T-cell (primary cell): ENCODE measurements at regions of chr4 and their contacts with region 1.

Region 1: DNA sequence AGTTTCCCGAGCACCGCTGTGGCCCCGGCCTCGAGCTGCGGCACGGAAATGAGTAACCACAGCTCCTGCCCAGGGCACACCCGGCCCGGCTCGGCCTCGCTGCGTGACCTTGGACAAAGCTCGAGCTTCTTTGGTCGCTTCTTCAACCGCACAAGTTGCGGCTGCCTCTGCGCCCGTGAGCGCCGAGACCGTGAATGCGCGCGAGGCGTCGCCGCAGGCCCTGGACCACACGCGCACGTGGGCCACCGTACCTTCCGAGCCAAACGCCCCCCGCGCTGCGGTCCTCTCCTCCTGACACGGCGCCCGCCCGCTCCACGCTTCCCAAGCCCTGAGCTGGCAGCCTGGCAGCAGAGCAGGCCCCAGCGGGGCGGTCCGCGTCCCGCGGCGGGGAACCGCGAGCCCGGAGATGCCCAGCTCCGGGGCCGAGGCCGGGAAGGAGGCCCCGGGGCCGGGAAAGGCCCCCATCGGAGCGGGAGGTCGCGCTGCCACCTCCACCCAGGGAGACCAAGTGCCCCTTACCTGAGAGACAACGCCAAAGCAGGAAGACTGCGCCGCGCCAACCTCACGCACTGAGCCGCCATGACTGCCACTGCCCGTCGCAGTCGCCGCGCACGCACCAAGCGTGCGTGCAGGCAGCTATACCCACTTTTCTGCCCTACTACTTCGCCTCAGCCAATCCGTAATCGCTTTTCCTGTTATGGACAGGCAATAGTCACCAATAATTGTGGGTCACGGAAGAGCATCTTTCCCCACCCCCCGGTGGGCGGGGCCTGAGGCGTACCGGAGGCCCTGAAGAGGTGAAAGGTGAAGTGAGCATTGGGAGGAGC is at the start of gene GRPEL1:
- DNase-seq: peak in 34 of 35 experiments; percentile 98 to 100 (median 100)
- ATAC-seq: peak; percentile 86 to 94 (median 91)
- H3K4me3 ChIP-seq: peak within 1 kb of the TSS; percentile 81 to 86
- H3K4me3 Mint-ChIP-seq: peak within 1 kb of the TSS; percentile 90 to 97 (median 93)
- H3K27ac ChIP-seq: peak within 1 kb of the TSS; percentile 59
- H3K27ac Mint-ChIP-seq: peak within 1 kb of the TSS; percentile 96
- H3K4me1 ChIP-seq: peaks cover 11 to 50% of the 10 kb centered on the region in 2 experiments
- H3K4me1 Mint-ChIP-seq: peaks cover 42 to 57% (median 55%) of the 10 kb centered on the region in 3 donors
- H3K27me3 ChIP-seq: peaks cover 0 to 7% of the 10 kb centered on the region in 2 experiments
- H3K27me3 Mint-ChIP-seq: peaks cover 0 to 2% of the 10 kb centered on the region in 2 donors
- total RNA-seq, gene GRPEL1: 29.9 to 54.6 (median 36.8) TPM

Region 2: DNA sequence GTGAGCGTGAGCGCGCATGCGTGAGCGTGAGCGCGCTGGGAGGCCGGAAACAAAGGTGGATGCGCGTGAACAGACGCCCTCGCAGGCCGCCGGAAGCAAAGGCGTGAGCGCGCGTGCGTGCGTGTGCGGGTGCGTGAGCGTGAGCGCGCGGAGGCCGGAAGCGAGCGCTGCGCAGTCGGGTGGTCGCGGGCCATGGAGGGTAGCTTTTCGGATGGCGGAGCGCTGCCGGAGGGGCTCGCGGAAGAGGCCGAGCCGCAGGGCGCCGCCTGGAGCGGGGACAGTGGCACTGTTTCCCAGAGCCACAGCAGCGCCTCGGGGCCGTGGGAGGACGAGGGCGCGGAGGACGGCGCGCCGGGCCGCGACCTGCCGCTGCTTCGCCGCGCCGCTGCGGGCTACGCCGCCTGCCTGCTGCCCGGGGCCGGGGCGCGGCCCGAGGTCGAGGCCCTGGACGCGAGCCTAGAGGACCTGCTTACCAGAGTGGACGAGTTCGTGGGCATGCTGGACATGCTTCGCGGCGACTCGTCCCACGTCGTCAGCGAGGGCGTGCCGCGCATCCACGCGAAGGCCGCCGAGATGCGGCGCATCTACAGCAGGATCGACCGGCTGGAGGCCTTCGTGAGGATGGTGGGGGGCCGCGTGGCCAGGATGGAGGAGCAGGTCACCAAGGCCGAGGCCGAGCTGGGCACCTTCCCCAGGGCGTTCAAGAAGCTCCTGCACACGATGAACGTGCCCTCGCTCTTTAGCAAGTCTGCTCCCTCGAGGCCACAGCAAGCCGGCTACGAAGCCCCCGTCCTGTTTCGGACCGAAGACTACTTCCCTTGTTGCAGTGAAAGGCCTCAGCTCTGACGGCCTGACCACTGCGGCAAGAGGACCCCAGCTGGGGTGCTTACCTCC is 351.4 kb before region 1 on chr4 and contains the start of gene BLOC1S4:
- CTCF ChIA-PET with region 1: interaction called, 4 to 13 read pairs
- POLR2A ChIA-PET with region 1: no interaction called
- DNase-seq: peak; percentile 78 to 99 (median 87)
- ATAC-seq: peak; percentile 85 to 90 (median 86)
- H3K4me3 ChIP-seq: peak within 1 kb of the TSS; percentile 87 to 90
- H3K4me3 Mint-ChIP-seq: peak within 1 kb of the TSS; percentile 90 to 96 (median 91)
- H3K27ac ChIP-seq: peak within 1 kb of the TSS; percentile 82
- H3K27ac Mint-ChIP-seq: peak within 1 kb of the TSS; percentile 87 to 95
- H3K4me1 ChIP-seq: peaks cover 15 to 27% of the 10 kb centered on the region in 2 experiments
- H3K4me1 Mint-ChIP-seq: peaks cover 34 to 42% (median 42%) of the 10 kb centered on the region in 3 donors
- H3K27me3 ChIP-seq: no peaks in the 10 kb centered on the region
- H3K27me3 Mint-ChIP-seq: no peaks in the 10 kb centered on the region
- total RNA-seq, gene BLOC1S4: 20.7 to 41.9 (median 36.6) TPM

Region 3: GRCh38 chr4:6986781-6987587 is 80.7 kb before region 1 on chr4:
- CTCF ChIA-PET with region 1: interaction called, 3 to 4 read pairs
- POLR2A ChIA-PET with region 1: interaction called in 1 of 2 experiments, 11 read pairs
- DNase-seq: peak; percentile 86 to 97 (median 91)
- ATAC-seq: peak; percentile 91 to 96 (median 93)
- H3K4me3 ChIP-seq: peak overlapping the region; percentile 66 to 82
- H3K4me3 Mint-ChIP-seq: peak overlapping the region; percentile 94 to 97 (median 95)
- H3K27ac ChIP-seq: peak overlapping the region; percentile 83
- H3K27ac Mint-ChIP-seq: peak overlapping the region; percentile 97
- H3K4me1 ChIP-seq: peaks cover 19 to 57% of the 10 kb centered on the region in 2 experiments
- H3K4me1 Mint-ChIP-seq: peaks cover 77 to 85% (median 82%) of the 10 kb centered on the region in 3 donors
- H3K27me3 ChIP-seq: no peaks in the 10 kb centered on the region
- H3K27me3 Mint-ChIP-seq: no peaks in the 10 kb centered on the region

Region 4: DNA sequence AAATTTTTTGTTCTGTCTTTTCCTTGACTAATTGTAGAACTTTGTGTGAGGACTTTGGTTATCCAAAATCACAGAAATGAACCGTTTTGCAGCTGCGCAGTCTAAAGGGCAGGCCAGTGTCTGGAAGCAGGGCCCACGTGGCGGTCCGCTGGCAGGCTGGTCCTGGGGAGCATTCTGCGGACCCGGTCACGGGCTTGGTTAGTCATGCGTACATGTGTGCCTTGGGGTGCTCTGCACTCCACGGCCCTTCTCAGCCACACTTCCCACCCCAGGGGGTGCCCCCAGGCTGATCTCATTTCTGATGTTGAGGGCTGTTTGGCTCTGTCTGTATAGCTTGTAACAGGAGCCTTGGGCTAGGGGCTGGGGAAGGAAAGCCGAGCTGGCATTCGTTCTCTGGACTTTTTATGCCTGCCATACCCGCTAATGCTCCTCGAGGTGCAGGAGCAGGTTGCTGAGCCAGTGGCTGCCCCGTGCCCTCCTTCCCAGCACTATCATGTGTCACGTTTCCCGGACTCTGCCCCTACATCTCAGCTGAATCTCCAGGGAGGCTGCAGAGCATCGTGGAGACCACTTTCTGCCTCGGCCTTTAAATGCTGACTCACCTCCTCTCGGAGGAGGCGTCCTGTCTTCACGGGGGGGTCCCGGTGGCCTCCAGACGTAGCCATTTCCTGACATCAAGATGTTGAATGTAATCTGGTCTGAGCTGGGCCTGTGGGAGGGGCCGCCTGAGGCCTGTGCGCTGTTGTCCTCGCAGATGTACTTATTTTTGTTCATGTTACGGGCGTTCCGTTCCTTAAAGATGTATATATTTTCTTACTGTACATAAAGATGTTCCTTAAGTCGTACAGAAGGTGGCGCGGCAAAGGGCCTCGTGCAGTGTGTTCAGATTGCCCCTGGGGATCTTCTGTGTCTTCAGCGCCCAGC is 35.9 kb before region 1 on chr4:
- CTCF ChIA-PET with region 1: no interaction called
- POLR2A ChIA-PET with region 1: no interaction called
- DNase-seq: no peak
- ATAC-seq: no peak
- H3K4me3 ChIP-seq: no peak overlapping the region
- H3K4me3 Mint-ChIP-seq: no peak overlapping the region
- H3K27ac ChIP-seq: no peak overlapping the region
- H3K27ac Mint-ChIP-seq: no peak overlapping the region
- H3K4me1 ChIP-seq: no peaks in the 10 kb centered on the region
- H3K4me1 Mint-ChIP-seq: no peaks in the 10 kb centered on the region
- H3K27me3 ChIP-seq: no peaks in the 10 kb centered on the region
- H3K27me3 Mint-ChIP-seq: no peaks in the 10 kb centered on the region

Region 5: GRCh38 chr4:7042697-7043464 is 24.8 kb before region 1 on chr4 and contains the start of gene TADA2B:
- CTCF ChIA-PET with region 1: interaction called, 6 to 69 read pairs
- POLR2A ChIA-PET with region 1: interaction called, 6 to 10 read pairs
- DNase-seq: peak; percentile 66 to 93 (median 78)
- ATAC-seq: peak; percentile 79 to 82 (median 81)
- H3K4me3 ChIP-seq: peak within 1 kb of the TSS; percentile 77 to 81
- H3K4me3 Mint-ChIP-seq: peak within 1 kb of the TSS; percentile 88 to 92 (median 91)
- H3K27ac ChIP-seq: peak within 1 kb of the TSS; percentile 52
- H3K27ac Mint-ChIP-seq: peak within 1 kb of the TSS; percentile 80 to 85
- H3K4me1 ChIP-seq: peaks cover 16 to 54% of the 10 kb centered on the region in 2 experiments
- H3K4me1 Mint-ChIP-seq: peaks cover 48 to 53% (median 51%) of the 10 kb centered on the region in 3 donors
- H3K27me3 ChIP-seq: no peaks in the 10 kb centered on the region
- H3K27me3 Mint-ChIP-seq: no peaks in the 10 kb centered on the region
- total RNA-seq, gene TADA2B: 36.6 to 44.8 (median 42.3) TPM

Region 6: GRCh38 chr4:7089213-7089986 is 21.7 kb after region 1 on chr4:
- CTCF ChIA-PET with region 1: no interaction called
- POLR2A ChIA-PET with region 1: no interaction called
- DNase-seq: no peak
- ATAC-seq: no peak
- H3K4me3 ChIP-seq: no peak overlapping the region
- H3K4me3 Mint-ChIP-seq: no peak overlapping the region
- H3K27ac ChIP-seq: no peak overlapping the region
- H3K27ac Mint-ChIP-seq: no peak overlapping the region
- H3K4me1 ChIP-seq: no peaks in the 10 kb centered on the region
- H3K4me1 Mint-ChIP-seq: no peaks in the 10 kb centered on the region
- H3K27me3 ChIP-seq: peaks cover 9 to 31% of the 10 kb centered on the region in 2 experiments
- H3K27me3 Mint-ChIP-seq: peaks cover 32 to 54% of the 10 kb centered on the region in 2 donors

Region 7: DNA sequence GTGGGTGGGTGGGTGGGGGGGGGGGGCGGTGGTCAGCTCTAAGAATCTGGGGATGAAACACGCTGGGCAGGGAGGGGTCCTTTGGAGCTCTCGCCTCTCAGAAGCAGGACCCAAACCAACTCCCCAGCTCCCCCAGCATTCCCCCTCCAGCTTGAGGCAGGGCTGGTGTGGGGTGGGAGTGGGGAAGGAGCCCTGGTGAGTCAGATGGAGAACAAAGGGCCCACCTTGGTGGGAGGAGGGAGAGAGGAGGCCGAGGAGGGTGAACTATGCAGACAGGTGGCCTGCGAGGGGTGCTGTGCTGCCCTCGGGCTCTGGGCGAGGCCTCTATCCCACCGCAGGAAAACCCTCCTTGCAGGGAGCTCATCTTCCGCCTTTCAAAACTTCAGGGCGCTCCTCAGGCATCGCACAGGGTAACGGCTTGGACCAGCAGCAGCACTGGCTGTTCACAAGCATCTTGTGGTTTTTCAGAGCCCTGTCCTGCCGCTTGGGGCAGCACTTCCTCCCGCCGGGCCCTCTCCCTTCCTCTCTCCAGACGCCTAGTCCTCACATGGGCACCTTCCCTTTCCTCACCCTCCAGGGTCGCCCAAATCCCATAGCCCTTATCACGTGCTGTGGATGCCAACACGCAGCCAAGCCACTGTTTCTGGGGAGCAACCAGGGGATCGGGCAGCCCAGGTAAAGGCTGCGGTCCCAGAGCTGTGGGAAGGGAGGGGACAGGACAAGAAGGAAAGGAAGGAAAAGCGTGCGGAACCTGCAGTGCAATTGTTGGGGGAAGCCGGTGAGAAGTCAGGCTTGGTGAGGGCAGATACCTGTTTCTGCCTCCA is 34.2 kb after region 1 on chr4:
- CTCF ChIA-PET with region 1: interaction called, 5 to 10 read pairs
- POLR2A ChIA-PET with region 1: interaction called in 1 of 2 experiments, 3 read pairs
- DNase-seq: peak in 31 of 35 experiments; percentile 8 to 65 (median 36)
- ATAC-seq: peak; percentile 46 to 55 (median 51)
- H3K4me3 ChIP-seq: peak overlapping the region; percentile 21 to 84
- H3K4me3 Mint-ChIP-seq: peak overlapping the region; percentile 86 to 89 (median 89)
- H3K27ac ChIP-seq: no peak overlapping the region
- H3K27ac Mint-ChIP-seq: peak overlapping the region; percentile 14 to 55
- H3K4me1 ChIP-seq: peaks cover 8 to 27% of the 10 kb centered on the region in 2 experiments
- H3K4me1 Mint-ChIP-seq: peaks cover 15 to 27% (median 21%) of the 10 kb centered on the region in 3 donors
- H3K27me3 ChIP-seq: peaks cover 0 to 13% of the 10 kb centered on the region in 2 experiments
- H3K27me3 Mint-ChIP-seq: peaks cover 0 to under 1% of the 10 kb centered on the region in 2 donors

Region 8: GRCh38 chr4:7876201-7876875 is 808.7 kb after region 1 on chr4:
- CTCF ChIA-PET with region 1: no interaction called
- POLR2A ChIA-PET with region 1: no interaction called
- DNase-seq: peak in 10 of 35 experiments; percentile 11 to 53 (median 26)
- ATAC-seq: peak; percentile 79 to 93 (median 91)
- H3K4me3 ChIP-seq: no peak overlapping the region
- H3K4me3 Mint-ChIP-seq: peak overlapping the region; percentile 15 to 72 (median 45)
- H3K27ac ChIP-seq: peak overlapping the region; percentile 55
- H3K27ac Mint-ChIP-seq: peak overlapping the region; percentile 87 to 97
- H3K4me1 ChIP-seq: peaks cover 0 to 27% of the 10 kb centered on the region in 2 experiments
- H3K4me1 Mint-ChIP-seq: peaks cover 20 to 67% (median 40%) of the 10 kb centered on the region in 3 donors
- H3K27me3 ChIP-seq: no peaks in the 10 kb centered on the region
- H3K27me3 Mint-ChIP-seq: no peaks in the 10 kb centered on the region